ENCODE measurements at regions of chr4 and their contacts with region 1.

Region 1: DNA sequence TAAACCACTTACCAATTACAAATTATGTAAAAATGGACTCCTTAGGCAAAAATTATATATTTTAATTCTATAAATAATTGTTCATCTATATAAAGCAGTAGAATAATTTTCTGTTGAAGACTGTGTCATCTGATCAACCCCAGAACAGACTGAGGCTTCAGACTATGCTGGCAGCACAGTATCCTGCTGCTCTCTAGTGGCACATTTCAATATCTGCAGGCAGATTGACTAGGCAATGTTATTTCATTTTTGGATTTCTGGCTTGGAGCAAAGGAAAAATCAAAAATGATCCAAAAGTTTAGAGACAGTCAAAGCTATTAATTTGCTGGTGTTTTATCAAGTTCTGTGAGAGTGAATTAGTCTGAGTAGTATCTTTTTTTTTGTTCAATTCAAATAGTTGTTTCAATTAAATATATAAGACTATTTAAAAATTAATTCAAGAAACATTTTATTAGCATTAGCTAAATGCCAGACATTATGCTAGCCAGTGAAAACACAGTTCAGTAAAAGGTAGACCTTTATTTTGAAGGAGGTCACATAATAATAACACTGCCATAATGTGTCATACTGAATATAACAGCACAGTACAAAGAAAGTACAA is 21.3 kb upstream of the SULT1E1 start:
- DNase-seq: no peak
- ATAC-seq: peak; percentile 88
- H3K4me3 ChIP-seq: no peak overlapping the region
- H3K27ac ChIP-seq: no peak overlapping the region
- H3K4me1 ChIP-seq: no peaks in the 10 kb centered on the region
- H3K27me3 ChIP-seq: no peaks in the 10 kb centered on the region
- CTCF ChIP-seq: peak; percentile 68 to 83 (median 74)
- EP300 ChIP-seq: no peak
- POLR2A ChIP-seq: no peak
- RAD21 ChIP-seq: peak; percentile 99

Region 2: GRCh38 chr4:69322055-69322454 is 559.2 kb before region 1 on chr4:
- CTCF ChIA-PET with region 1: no interaction called
- POLR2A ChIA-PET with region 1: no interaction called
- RAD21 ChIA-PET with region 1: no interaction called
- SMC1A ChIA-PET with region 1: no interaction called
- in situ Hi-C with region 1: no loop called
- intact Hi-C with region 1: loop called (anchors 5 kb)
- DNase-seq: no peak
- ATAC-seq: no peak
- H3K4me3 ChIP-seq: no peak overlapping the region
- H3K27ac ChIP-seq: no peak overlapping the region
- H3K4me1 ChIP-seq: no peaks in the 10 kb centered on the region
- H3K27me3 ChIP-seq: no peaks in the 10 kb centered on the region
- CTCF ChIP-seq: no peak
- EP300 ChIP-seq: no peak
- POLR2A ChIP-seq: no peak
- RAD21 ChIP-seq: no peak

Region 3: DNA sequence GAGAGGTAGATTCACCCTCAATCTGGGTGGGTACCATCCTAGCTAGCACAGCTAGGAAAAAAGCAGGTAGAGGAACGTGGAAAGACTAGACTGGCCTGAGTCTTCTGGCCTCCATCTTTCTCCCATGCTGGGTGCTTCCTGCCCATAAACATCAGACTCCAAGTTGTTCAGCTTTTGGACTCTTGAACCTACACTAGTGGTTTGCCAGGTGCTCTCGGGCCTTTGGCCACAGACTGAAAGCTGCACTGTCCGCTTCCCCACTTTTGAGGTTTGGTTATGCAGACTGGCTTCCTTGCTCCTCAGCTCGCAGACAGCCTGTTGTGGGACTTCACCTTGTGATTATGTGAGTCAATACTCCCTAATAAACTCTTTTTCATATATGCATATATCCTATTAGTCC is 349.1 kb before region 1 on chr4:
- CTCF ChIA-PET with region 1: no interaction called
- POLR2A ChIA-PET with region 1: no interaction called
- RAD21 ChIA-PET with region 1: no interaction called
- SMC1A ChIA-PET with region 1: no interaction called
- in situ Hi-C with region 1: no loop called
- intact Hi-C with region 1: no loop called
- DNase-seq: no peak
- ATAC-seq: no peak
- H3K4me3 ChIP-seq: no peak overlapping the region
- H3K27ac ChIP-seq: no peak overlapping the region
- H3K4me1 ChIP-seq: no peaks in the 10 kb centered on the region
- H3K27me3 ChIP-seq: no peaks in the 10 kb centered on the region
- CTCF ChIP-seq: no peak
- EP300 ChIP-seq: no peak
- POLR2A ChIP-seq: no peak
- RAD21 ChIP-seq: no peak

Region 4: GRCh38 chr4:69689599-69689998 is 191.7 kb before region 1 on chr4:
- CTCF ChIA-PET with region 1: interaction called, 26 read pairs
- POLR2A ChIA-PET with region 1: no interaction called
- RAD21 ChIA-PET with region 1: interaction called, 6 read pairs
- SMC1A ChIA-PET with region 1: interaction called, 9 read pairs
- in situ Hi-C with region 1: loop called (anchors 5 kb)
- intact Hi-C with region 1: loop called (anchors 1 kb)
- DNase-seq: no peak
- ATAC-seq: peak; percentile 44; the same call in 1 of the 3 replicates
- H3K4me3 ChIP-seq: no peak overlapping the region
- H3K27ac ChIP-seq: no peak overlapping the region
- H3K4me1 ChIP-seq: no peaks in the 10 kb centered on the region
- H3K27me3 ChIP-seq: no peaks in the 10 kb centered on the region
- CTCF ChIP-seq: peak; percentile 21 to 61 (median 39); a peak in 3 of 6 replicates
- EP300 ChIP-seq: no peak
- POLR2A ChIP-seq: no peak
- RAD21 ChIP-seq: peak; percentile 85

Region 5: DNA sequence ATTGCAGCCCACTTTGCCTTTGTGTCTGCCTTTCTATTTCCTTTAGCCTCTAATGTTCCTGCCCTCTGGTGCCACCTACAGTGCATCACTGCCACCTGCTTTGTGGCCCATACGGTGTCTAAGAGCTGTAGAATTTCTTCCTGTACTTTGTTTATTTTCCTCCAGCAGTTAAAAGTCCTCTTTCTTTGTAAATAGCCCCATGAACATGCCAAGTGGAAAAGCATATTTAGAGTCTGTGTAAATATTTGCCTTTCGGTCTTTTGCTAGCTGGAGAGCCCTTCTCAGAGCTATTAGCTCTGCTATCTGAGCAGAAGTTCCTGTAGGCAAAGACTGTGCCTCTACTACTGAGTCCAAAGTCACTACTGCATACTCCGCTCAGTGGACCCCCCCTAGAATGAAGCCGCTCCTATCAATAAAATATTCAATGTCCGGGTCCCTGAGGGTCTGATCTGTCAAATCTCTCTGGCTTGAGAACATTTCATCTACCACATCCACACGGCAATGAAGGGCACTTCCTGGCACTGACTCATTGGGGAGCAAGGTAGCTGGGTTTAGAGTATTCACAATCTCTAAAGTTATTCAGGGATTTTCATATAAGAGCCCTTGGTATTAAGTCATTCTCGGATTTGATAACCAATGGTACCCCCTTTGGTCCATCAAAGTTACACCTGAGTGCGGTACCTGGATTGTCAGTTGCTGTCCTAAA is 57.6 kb before region 1 on chr4:
- CTCF ChIA-PET with region 1: interaction called, 11 read pairs
- POLR2A ChIA-PET with region 1: no interaction called
- RAD21 ChIA-PET with region 1: interaction called, 4 read pairs
- SMC1A ChIA-PET with region 1: interaction called, 6 read pairs
- in situ Hi-C with region 1: no loop called
- intact Hi-C with region 1: no loop called
- DNase-seq: no peak
- ATAC-seq: peak; percentile 97
- H3K4me3 ChIP-seq: no peak overlapping the region
- H3K27ac ChIP-seq: no peak overlapping the region
- H3K4me1 ChIP-seq: no peaks in the 10 kb centered on the region
- H3K27me3 ChIP-seq: no peaks in the 10 kb centered on the region
- CTCF ChIP-seq: peak; percentile 52 to 60 (median 58); a peak in 5 of 6 replicates
- EP300 ChIP-seq: no peak
- POLR2A ChIP-seq: no peak
- RAD21 ChIP-seq: peak; percentile 43; the same call in 1 of the 2 replicates

Region 6: DNA sequence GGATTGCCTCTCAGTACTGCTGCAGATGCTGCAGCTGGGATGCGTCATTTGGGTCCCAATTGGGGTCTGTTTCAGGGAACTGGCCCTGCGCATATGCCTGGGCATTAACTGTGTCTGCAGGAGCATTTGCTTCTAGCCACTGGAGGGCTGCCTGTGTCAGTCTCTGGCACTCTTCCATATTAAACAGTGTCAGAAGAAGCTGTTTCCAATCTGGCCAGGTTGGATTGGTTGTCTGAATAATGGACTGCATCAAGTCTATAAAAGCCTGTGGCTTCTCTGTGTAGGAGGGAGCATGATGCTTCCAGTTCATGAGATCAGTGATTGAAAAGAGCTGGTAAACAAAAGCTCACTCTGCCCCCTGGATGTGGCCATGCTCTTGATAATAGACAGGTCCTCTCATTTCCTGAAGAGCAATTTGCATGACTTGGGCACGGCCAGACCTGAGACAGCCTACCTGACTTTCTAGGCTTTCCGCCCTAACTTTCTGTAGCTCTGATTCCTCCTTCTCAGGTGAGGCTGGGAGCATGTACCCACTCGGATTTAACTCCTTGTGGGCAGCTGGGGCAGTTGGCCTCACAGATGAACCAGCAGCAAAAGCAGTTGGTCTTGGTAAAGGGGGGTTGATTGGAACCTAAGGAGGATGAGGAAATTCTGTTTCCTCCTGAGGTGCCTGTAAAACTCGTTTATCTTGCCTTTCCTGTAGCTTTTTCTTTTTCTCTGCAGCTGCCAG is 50.5 kb before region 1 on chr4:
- CTCF ChIA-PET with region 1: interaction called, 6 read pairs
- POLR2A ChIA-PET with region 1: no interaction called
- RAD21 ChIA-PET with region 1: interaction called, 4 read pairs
- SMC1A ChIA-PET with region 1: interaction called, 12 read pairs
- in situ Hi-C with region 1: no loop called
- intact Hi-C with region 1: no loop called
- DNase-seq: no peak
- ATAC-seq: peak; percentile 25
- H3K4me3 ChIP-seq: no peak overlapping the region
- H3K27ac ChIP-seq: no peak overlapping the region
- H3K4me1 ChIP-seq: peaks cover 19% of the 10 kb centered on the region
- H3K27me3 ChIP-seq: no peaks in the 10 kb centered on the region
- CTCF ChIP-seq: no peak
- EP300 ChIP-seq: no peak
- POLR2A ChIP-seq: no peak
- RAD21 ChIP-seq: no peak

Region 7: GRCh38 chr4:70225824-70226223 is 344.6 kb after region 1 on chr4 and contains the start of gene FDCSP:
- CTCF ChIA-PET with region 1: no interaction called
- POLR2A ChIA-PET with region 1: no interaction called
- RAD21 ChIA-PET with region 1: no interaction called
- SMC1A ChIA-PET with region 1: no interaction called
- in situ Hi-C with region 1: no loop called
- intact Hi-C with region 1: no loop called
- DNase-seq: no peak
- ATAC-seq: no peak
- H3K4me3 ChIP-seq: no peak within 1 kb of the TSS
- H3K27ac ChIP-seq: no peak within 1 kb of the TSS
- H3K4me1 ChIP-seq: no peaks in the 10 kb centered on the region
- H3K27me3 ChIP-seq: no peaks in the 10 kb centered on the region
- CTCF ChIP-seq: no peak
- EP300 ChIP-seq: no peak
- POLR2A ChIP-seq: no peak
- RAD21 ChIP-seq: no peak
- polyA plus RNA-seq, gene FDCSP: not detected

Region 8: DNA sequence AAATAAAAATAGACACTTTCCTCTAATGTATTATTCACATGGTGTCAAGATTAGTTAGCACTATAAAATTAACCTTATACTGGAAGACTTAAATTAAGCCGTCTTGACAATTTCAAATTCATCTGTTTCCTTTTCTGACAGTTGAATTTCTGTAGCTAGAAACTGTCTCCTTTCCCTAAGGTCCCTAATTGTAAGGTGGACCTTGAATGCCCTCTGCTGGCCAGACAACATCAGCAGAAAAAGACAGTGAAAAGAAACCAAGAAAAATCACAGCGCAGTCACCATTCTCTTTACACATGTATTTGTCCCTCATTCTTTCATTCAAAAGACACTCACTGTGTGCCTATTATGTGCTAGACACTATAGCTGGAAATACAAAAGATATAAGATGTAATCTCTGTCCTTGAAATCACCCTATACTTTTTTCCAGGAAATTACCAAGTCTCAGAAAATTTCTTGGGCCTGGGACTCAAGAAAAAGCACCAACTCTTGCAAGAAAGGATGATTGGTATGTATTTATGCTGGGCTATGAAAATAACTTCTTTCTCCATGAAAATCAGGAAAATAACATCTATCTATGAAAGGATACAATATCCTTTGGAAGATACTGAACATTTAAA is 678.0 kb after region 1 on chr4:
- CTCF ChIA-PET with region 1: interaction called, 6 read pairs
- POLR2A ChIA-PET with region 1: no interaction called
- RAD21 ChIA-PET with region 1: interaction called, 3 read pairs
- SMC1A ChIA-PET with region 1: no interaction called
- in situ Hi-C with region 1: no loop called
- intact Hi-C with region 1: loop called (anchors 10 kb)
- DNase-seq: no peak
- ATAC-seq: peak; percentile 84
- H3K4me3 ChIP-seq: no peak overlapping the region
- H3K27ac ChIP-seq: no peak overlapping the region
- H3K4me1 ChIP-seq: no peaks in the 10 kb centered on the region
- H3K27me3 ChIP-seq: no peaks in the 10 kb centered on the region
- CTCF ChIP-seq: peak; percentile 62 to 67 (median 67)
- EP300 ChIP-seq: no peak
- POLR2A ChIP-seq: no peak
- RAD21 ChIP-seq: peak; percentile 82